CD4-positive, alpha-beta T cell (primary cell): ENCODE measurements at regions of chr15 and their contacts with region 1.

Region 1: DNA sequence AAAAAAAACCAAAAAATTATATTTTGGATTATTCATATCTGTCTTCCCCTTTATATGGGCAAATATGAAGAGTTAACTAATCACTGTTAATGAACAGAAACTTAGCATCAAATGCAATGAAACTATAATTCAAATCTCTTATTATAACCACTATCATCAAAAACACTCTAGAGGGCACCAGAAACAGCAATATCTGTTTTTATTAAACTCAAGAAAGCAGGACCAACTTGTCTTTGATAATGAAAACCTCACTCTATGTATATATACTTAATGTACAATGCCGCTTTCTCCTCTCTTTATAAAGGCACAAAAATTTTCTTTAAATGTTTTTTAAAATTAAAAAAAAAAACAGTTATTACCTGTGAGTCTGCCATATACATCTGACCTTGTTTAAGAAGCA is 92.7 kb downstream of the UACA start:
- DNase-seq: peak in 3 of 14 experiments; percentile 29 to 37 (median 31)
- ATAC-seq: no peak
- H3K4me3 ChIP-seq: no peak overlapping the region
- H3K4me3 Mint-ChIP-seq: no peak overlapping the region
- H3K27ac ChIP-seq: no peak overlapping the region
- H3K27ac Mint-ChIP-seq: no peak overlapping the region
- H3K4me1 ChIP-seq: peaks cover 8% of the 10 kb centered on the region
- H3K4me1 Mint-ChIP-seq: peaks cover 24% of the 10 kb centered on the region
- H3K27me3 ChIP-seq: peaks cover 3 to 8% of the 10 kb centered on the region in 2 experiments
- H3K27me3 Mint-ChIP-seq: peaks cover 4% of the 10 kb centered on the region
- CTCF ChIP-seq: peak; percentile 62

Region 2: DNA sequence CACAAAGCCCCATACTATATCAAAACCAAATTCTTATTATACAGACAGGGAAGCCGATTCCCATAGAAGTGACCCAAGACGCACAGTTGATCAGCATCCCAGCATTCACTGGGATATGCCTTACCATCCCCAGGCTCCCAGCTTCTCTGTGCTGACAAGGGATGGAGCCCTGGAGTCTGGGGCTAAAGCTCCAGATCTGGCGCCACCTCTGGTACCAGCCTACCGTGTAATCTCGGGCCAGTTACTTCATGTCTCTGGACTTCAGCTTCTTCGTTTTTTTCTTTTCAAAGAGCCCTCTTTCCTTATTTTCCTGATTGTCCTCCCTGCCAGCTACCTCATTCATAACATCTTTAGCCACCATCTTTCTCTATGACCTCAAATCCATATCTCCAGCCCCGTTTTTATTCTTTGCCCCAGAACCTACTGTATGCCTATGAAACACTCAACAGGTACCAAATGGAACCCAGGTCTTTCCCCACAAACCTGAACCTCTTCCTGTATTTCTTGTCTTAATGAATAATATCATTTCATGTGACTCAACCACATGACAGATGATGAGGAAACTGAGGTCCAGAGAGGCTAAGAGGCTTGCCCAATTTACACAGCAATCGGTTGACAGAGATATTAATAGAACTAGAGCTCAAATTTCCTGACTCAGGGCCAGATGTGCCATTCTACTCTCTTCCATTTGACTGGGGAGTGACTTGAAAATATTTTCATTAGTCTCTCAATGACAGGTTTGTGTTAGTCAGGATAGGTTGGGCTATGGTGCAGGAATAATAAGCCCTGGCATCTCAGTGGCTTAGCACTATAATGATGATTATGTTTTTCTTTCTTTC is 487.6 kb before region 1 on chr15:
- CTCF ChIA-PET with region 1: no interaction called
- POLR2A ChIA-PET with region 1: no interaction called
- intact Hi-C with region 1: no loop called
- DNase-seq: peak in 1 of 14 experiments; percentile 10
- ATAC-seq: no peak
- H3K4me3 ChIP-seq: no peak overlapping the region
- H3K4me3 Mint-ChIP-seq: no peak overlapping the region
- H3K27ac ChIP-seq: no peak overlapping the region
- H3K27ac Mint-ChIP-seq: no peak overlapping the region
- H3K4me1 ChIP-seq: no peaks in the 10 kb centered on the region
- H3K4me1 Mint-ChIP-seq: peaks cover 5% of the 10 kb centered on the region
- H3K27me3 ChIP-seq: no peaks in the 10 kb centered on the region
- H3K27me3 Mint-ChIP-seq: no peaks in the 10 kb centered on the region
- CTCF ChIP-seq: no peak

Region 3: DNA sequence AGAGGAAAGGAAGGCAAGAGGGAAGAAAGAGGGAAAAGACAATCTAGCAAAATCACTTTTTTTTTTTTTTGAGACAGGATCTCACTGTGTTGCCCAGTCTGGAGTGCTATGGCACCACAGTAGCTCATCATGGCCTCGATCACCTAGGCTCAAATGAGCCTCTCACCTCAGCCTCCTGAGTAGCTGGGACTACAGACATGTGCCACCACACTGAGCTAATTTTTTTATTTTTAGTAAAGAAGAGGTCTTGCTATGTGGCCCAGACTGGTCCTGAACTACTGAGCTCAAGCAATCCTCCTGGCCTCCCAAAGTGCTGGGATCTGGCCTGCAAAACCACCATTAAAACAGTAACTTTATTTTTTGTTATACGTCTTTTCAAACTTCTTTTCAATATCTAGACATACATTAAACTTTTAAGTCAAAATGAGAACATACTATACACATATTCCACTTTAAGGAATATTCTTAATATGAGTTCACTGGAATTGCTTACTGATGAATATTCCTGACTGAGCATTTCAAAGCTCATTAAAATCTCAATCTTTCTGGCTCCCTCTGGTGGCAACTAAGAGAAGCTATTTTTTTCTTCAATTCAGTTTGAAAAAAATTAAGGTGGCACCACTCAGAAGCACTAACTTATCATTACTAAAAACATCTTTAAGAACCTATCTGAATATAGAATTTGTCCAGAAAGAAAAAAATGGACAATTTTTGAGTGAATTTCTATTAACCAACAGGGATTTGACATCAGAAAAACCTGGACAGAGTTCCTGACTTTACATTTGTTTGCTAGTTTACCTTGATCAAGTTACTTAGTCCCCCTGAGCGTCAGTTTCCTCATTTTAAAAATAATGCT is 51.8 kb after region 1 on chr15:
- CTCF ChIA-PET with region 1: interaction called, 5 read pairs
- POLR2A ChIA-PET with region 1: interaction called, 10 read pairs
- intact Hi-C with region 1: loop called (anchors 10 kb)
- DNase-seq: peak in 3 of 14 experiments; percentile 46 to 70 (median 58)
- ATAC-seq: no peak
- H3K4me3 ChIP-seq: no peak overlapping the region
- H3K4me3 Mint-ChIP-seq: no peak overlapping the region
- H3K27ac ChIP-seq: no peak overlapping the region
- H3K27ac Mint-ChIP-seq: no peak overlapping the region
- H3K4me1 ChIP-seq: no peaks in the 10 kb centered on the region
- H3K4me1 Mint-ChIP-seq: no peaks in the 10 kb centered on the region
- H3K27me3 ChIP-seq: peaks cover 3 to 20% of the 10 kb centered on the region in 2 experiments
- H3K27me3 Mint-ChIP-seq: peaks cover 19% of the 10 kb centered on the region
- CTCF ChIP-seq: peak; percentile 85

Region 4: DNA sequence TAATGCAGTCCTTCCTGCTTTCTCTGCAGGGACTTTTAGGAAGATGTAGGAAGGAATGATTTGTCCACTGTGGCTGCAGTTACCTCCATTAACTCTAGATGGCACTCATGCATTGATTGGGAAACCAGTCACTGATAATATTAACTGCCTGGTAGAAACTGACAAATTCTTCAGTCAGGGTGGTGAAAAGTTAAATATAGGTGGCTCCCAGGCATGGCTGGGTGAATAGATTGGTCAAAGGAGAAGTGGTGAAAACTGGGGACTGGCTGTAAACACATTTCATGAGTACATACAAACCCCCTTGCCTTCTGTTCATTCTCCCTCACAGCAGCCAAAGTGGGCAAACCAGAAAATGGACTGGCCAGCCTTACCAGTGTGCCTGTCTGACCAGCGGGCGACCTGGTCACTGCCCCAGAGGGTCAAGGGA is 778.0 kb after region 1 on chr15:
- CTCF ChIA-PET with region 1: no interaction called
- POLR2A ChIA-PET with region 1: no interaction called
- intact Hi-C with region 1: loop called (anchors 5 to 10 kb)
- DNase-seq: peak in 2 of 14 experiments; percentile 3 to 18
- ATAC-seq: no peak
- H3K4me3 ChIP-seq: no peak overlapping the region
- H3K4me3 Mint-ChIP-seq: no peak overlapping the region
- H3K27ac ChIP-seq: no peak overlapping the region
- H3K27ac Mint-ChIP-seq: no peak overlapping the region
- H3K4me1 ChIP-seq: no peaks in the 10 kb centered on the region
- H3K4me1 Mint-ChIP-seq: no peaks in the 10 kb centered on the region
- H3K27me3 ChIP-seq: peaks cover 0 to 6% of the 10 kb centered on the region in 2 experiments
- H3K27me3 Mint-ChIP-seq: peaks cover 14% of the 10 kb centered on the region
- CTCF ChIP-seq: peak; percentile 51